ENCODE measurements at regions of chr4 and their contacts with region 1.

Region 1: DNA sequence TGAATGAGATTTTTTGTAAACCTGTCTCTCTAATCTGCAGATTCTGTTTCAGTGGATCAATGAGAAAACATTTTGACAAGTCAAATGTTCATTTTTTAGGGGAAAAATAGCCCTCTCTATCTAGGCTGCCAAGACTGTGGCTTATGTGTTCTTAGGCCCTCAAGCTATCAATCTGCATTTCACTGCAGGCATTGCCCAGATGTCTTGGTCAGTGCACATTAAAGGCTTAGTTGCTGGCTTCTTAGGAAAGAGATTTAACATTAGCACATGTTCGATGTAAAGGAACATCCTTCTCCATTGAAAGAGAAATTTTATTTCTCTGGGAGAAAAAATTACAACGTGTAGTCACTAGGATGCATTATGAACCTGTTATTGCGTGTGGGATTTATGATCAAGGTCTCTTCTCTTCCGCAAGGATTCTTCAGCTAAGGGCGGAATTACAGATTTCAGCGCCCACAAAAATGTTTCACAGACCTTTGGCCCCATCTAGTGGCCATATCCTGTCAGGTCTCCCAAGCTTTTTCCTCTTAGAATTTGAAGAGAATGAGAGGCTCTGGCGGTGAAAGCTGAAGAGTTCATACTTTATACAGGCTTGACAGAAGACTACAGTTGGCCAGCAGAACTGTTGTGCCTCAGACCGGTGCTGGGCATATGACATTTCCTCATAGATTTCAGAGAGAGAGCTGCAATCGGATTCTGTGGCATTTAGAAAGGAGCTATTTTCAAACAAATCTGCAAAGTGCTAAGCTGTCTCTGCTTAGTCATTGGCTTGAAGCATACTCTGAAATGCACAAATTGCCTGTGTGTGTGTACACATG is 144.6 kb upstream of the NOCT start:
- DNase-seq: peak; percentile 41 to 84
- H3K4me3 ChIP-seq: no peak overlapping the region
- H3K27ac ChIP-seq: no peak overlapping the region
- H3K4me1 ChIP-seq: peaks cover 0 to 3% (median under 1%) of the 10 kb centered on the region in 4 experiments; a peak in 4 of 7 replicates
- H3K27me3 ChIP-seq: no peaks in the 10 kb centered on the region
- CTCF ChIP-seq: peak in 2 of 3 experiments; percentile 70 to 85; a peak in 3 of 4 replicates
- EP300 ChIP-seq: no peak
- POLR2A ChIP-seq: no peak
- RAD21 ChIP-seq: peak; percentile 93 to 97

Region 2: DNA sequence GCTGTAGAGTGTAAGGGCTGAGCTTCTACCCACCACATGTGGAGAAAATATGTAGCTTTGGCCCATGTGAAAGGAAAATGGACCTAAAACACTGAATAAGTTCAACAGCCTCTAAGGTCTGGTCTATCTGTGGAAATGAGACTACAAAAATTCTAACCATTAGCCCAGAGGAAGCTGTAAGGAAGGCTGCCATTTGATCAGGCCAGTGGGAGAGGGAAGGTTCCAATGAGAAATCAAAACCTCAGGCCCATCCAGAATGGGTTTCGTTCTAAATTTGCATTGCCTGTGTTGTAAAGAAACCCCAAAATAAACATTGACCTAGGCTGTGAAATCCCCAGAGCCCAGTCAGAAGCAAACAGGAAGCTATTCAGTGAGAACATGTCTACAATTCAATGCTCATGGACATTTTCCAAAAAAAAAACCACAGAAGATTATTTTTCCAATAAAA is 308.4 kb before region 1 on chr4:
- CTCF ChIA-PET with region 1: interaction called, 14 read pairs
- POLR2A ChIA-PET with region 1: no interaction called
- DNase-seq: no peak
- H3K4me3 ChIP-seq: no peak overlapping the region
- H3K27ac ChIP-seq: no peak overlapping the region
- H3K4me1 ChIP-seq: no peaks in the 10 kb centered on the region
- H3K27me3 ChIP-seq: no peaks in the 10 kb centered on the region
- CTCF ChIP-seq: no peak
- EP300 ChIP-seq: no peak
- POLR2A ChIP-seq: no peak
- RAD21 ChIP-seq: no peak

Region 3: GRCh38 chr4:138692411-138693034 is 178.4 kb before region 1 on chr4:
- CTCF ChIA-PET with region 1: interaction called, 19 read pairs
- POLR2A ChIA-PET with region 1: no interaction called
- DNase-seq: no peak
- H3K4me3 ChIP-seq: no peak overlapping the region
- H3K27ac ChIP-seq: no peak overlapping the region
- H3K4me1 ChIP-seq: peaks cover 0 to 5% (median 0%) of the 10 kb centered on the region in 4 experiments; a peak in 3 of 7 replicates
- H3K27me3 ChIP-seq: no peaks in the 10 kb centered on the region
- CTCF ChIP-seq: no peak
- EP300 ChIP-seq: no peak
- POLR2A ChIP-seq: no peak
- RAD21 ChIP-seq: no peak

Region 4: DNA sequence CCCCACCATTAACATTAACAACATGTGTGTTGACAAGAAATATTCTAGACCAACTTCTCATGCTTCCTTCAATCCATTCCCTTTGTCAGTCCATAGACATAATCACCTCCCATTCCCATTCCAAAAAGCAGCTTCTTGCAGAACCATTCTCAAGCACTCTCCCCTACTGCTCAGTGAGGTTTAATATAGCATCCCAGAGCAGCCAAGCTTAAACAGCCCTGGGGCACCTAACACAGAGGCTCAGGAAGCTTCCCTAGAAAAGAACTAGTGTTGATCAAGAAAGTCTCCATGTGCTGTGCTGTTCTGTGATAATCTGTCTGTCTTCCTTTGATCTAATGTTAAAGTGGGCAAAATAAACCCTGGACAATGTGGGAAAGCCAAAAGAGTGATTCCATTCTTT is 29.6 kb before region 1 on chr4:
- CTCF ChIA-PET with region 1: interaction called, 13 read pairs
- POLR2A ChIA-PET with region 1: no interaction called
- DNase-seq: no peak
- H3K4me3 ChIP-seq: no peak overlapping the region
- H3K27ac ChIP-seq: no peak overlapping the region
- H3K4me1 ChIP-seq: peaks cover 0 to 2% (median 1%) of the 10 kb centered on the region in 4 experiments; a peak in 2 of 7 replicates
- H3K27me3 ChIP-seq: no peaks in the 10 kb centered on the region
- CTCF ChIP-seq: no peak
- EP300 ChIP-seq: no peak
- POLR2A ChIP-seq: no peak
- RAD21 ChIP-seq: no peak

Region 5: DNA sequence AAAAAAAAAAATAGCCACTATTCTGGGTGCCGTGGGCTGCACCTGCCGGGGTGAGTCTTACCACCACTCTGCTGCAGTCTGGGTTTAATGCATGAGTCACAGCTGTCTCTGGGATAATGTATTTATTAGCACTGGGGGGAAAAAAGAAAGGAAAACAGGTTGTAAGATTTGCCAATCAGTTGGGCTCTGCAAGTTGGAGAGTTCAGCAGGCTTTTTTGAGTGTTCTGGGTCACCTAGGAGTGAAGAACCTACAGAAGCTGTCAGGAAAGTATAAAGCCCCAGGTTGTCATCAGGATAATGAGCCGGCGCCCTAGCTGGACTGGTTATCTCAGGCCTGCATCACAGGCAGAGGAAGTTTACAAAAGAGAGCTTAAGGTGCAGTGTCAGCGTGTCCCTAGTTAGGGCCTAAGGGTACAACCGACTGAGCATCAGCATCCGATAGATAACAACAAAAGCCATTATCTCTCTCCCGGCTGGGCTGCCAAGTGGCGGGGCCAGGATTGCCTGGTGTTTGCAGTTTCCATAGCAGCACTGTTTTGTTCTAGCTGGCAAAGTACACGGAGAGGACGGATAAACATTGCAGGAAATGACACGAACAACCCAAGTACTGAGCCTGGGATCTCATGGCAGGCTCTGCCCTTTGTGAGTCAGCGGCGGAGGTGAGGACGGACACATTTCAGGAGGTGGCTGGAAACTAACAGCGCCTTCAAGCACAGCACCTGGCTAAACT is 39.8 kb after region 1 on chr4:
- CTCF ChIA-PET with region 1: interaction called, 20 read pairs
- POLR2A ChIA-PET with region 1: no interaction called
- DNase-seq: peak in 1 of 2 experiments; percentile 5
- H3K4me3 ChIP-seq: no peak overlapping the region
- H3K27ac ChIP-seq: no peak overlapping the region
- H3K4me1 ChIP-seq: peaks cover 0 to 6% (median 2%) of the 10 kb centered on the region in 4 experiments; a peak in 2 of 7 replicates
- H3K27me3 ChIP-seq: no peaks in the 10 kb centered on the region
- CTCF ChIP-seq: no peak
- EP300 ChIP-seq: no peak
- POLR2A ChIP-seq: no peak
- RAD21 ChIP-seq: no peak

Region 6: GRCh38 chr4:138938366-138938690 is 67.4 kb after region 1 on chr4:
- CTCF ChIA-PET with region 1: interaction called, 21 read pairs
- POLR2A ChIA-PET with region 1: no interaction called
- DNase-seq: no peak
- H3K4me3 ChIP-seq: no peak overlapping the region
- H3K27ac ChIP-seq: no peak overlapping the region
- H3K4me1 ChIP-seq: peaks cover 3 to 8% (median 6%) of the 10 kb centered on the region in 4 experiments; a peak in 6 of 7 replicates
- H3K27me3 ChIP-seq: no peaks in the 10 kb centered on the region
- CTCF ChIP-seq: peak in 2 of 3 experiments; percentile 48 to 57; a peak in 2 of 4 replicates
- EP300 ChIP-seq: no peak
- POLR2A ChIP-seq: no peak
- RAD21 ChIP-seq: peak; percentile 81 to 83

Region 7: GRCh38 chr4:139301821-139302611 is 431.1 kb after region 1 on chr4 and contains the start of gene NDUFC1:
- CTCF ChIA-PET with region 1: no interaction called
- POLR2A ChIA-PET with region 1: no interaction called
- DNase-seq: peak in 1 of 2 experiments; percentile 75
- H3K4me3 ChIP-seq: peak within 1 kb of the TSS; percentile 91 to 100 (median 93)
- H3K27ac ChIP-seq: peak within 1 kb of the TSS; percentile 83
- H3K4me1 ChIP-seq: peaks cover 0 to 2% (median 0%) of the 10 kb centered on the region in 4 experiments; a peak in 1 of 7 replicates
- H3K27me3 ChIP-seq: no peaks in the 10 kb centered on the region
- CTCF ChIP-seq: no peak
- EP300 ChIP-seq: no peak
- POLR2A ChIP-seq: peak; percentile 19 to 81
- RAD21 ChIP-seq: no peak
- total RNA-seq, gene NDUFC1: 54.5 and 62.0 TPM in 2 replicates